Activated T-helper 2 cell treated with anti-CD3 and anti-CD28 coated beads, Interferon-gamma antibody, Interleukin-2, Interleukin-4, amounts not matched to agents 10 μg/mL and 5 μg/mL and 100 μg/mL, durations not matched to agents 14 hours and 24 hours and 36 hours (primary cell): ENCODE measurements at regions of chr16 and their contacts with region 1.

Region 1: DNA sequence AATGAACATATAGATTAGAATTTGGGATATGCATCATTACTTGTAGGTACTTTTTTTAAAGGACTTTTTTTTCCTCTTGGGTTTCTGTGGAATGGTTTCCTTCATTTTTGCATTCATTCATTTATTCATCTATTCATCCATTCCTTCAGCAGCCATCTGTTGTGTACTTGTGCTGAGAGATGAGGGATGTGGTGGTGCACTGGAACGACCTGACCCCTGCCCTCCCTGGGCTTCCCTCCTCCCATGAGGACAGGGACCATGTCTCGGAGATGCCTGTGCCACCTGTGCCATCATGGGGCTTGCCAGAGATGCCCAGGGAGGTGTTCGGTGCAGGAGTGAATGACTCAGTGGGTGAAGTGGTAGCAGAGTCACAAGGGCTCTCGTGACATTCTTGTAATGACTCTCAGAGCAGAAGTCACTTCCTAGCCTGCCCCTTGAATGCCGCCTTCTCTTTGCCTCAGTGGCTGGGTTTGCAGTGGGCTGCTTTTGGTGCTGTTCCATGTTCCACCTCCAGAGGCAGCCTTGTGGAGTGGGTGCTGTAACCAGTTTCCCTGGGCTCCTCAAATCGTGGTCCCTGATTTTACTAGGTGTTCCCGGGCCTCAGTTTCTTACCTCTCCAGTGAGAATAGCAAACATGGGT is 43.9 kb downstream of the CLEC16A start:
- DNase-seq: peak; percentile 63
- H3K4me3 Mint-ChIP-seq: peak overlapping the region; percentile 62
- H3K27ac Mint-ChIP-seq: peak overlapping the region; percentile 84
- H3K4me1 Mint-ChIP-seq: peaks cover 81% of the 10 kb centered on the region
- H3K27me3 Mint-ChIP-seq: no peaks in the 10 kb centered on the region

Region 2: DNA sequence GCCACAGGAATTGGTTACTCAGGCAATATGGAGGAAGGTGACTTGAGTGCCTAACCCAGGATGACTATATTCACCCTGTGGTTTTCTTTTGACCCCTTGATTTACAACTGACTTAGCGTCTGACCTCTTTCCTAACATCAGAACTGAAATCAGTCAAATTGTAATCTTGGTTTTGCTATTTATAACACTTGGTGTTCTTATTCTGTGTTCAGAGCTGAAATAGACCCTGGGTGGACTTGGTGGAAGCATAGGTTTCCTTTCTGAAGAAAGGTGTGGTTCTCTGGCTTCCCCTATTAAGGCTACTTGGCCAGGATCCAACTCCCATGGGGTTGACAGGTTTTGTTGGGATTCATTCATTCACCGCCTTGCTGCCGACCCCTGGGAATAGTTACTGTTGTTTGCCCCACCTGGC is 36.8 kb after region 1 on chr16:
- intact Hi-C with region 1: loop called (anchors 1 kb)
- DNase-seq: no peak
- H3K4me3 Mint-ChIP-seq: no peak overlapping the region
- H3K27ac Mint-ChIP-seq: peak overlapping the region; percentile 92
- H3K4me1 Mint-ChIP-seq: peaks cover 42% of the 10 kb centered on the region
- H3K27me3 Mint-ChIP-seq: no peaks in the 10 kb centered on the region

Region 3: GRCh38 chr16:11076259-11077018 is 88.2 kb after region 1 on chr16:
- intact Hi-C with region 1: loop called (anchors 1 kb)
- DNase-seq: peak; percentile 70
- H3K4me3 Mint-ChIP-seq: peak overlapping the region; percentile 31
- H3K27ac Mint-ChIP-seq: peak overlapping the region; percentile 94
- H3K4me1 Mint-ChIP-seq: peaks cover 95% of the 10 kb centered on the region
- H3K27me3 Mint-ChIP-seq: no peaks in the 10 kb centered on the region

Region 4: GRCh38 chr16:11094072-11094856 is 106.0 kb after region 1 on chr16:
- intact Hi-C with region 1: loop called (anchors 1 kb)
- DNase-seq: peak; percentile 67
- H3K4me3 Mint-ChIP-seq: peak overlapping the region; percentile 50
- H3K27ac Mint-ChIP-seq: peak overlapping the region; percentile 98
- H3K4me1 Mint-ChIP-seq: peaks cover 75% of the 10 kb centered on the region
- H3K27me3 Mint-ChIP-seq: no peaks in the 10 kb centered on the region

Region 5: DNA sequence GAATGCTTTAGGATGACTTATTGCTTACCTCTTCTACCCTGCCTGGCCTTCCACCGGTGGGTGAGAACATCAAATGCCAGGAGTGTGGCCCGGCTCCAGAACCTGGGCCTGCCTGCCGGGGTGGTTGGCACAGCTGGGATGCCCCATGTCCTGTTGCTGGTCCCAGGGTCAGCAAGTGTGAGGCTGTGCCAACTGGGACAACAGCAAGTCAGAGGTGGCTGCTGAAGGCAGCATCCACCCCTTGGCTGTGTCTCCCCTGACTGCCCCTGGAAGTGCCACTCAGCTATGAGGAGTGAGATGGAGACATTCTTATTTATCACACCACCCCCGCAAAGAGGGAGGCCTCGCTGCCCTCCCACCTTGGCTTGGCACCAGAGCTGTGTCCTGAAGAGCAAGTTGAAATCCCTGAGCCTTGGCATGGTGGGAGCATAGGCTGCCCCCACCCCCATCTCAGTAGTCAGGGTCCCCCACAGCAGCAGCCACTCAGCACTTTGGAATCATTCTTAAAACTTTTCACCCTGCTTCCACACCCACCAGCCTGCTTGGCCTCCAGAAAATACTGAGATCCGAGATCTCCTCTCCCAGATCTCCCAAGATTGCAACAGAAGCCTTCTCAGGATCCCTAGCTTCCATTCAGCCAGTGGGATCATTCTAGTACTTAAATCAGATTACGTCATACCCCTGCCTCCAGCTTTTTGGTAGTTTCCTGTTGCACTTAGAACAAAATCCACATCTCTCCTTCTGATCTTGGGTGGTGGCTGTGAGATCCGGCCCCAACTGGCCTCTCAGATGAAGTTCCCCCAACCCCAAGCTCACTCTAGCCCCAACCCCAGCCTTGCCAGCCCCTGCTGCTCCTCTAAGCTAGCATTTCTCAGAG is 140.2 kb after region 1 on chr16:
- intact Hi-C with region 1: no loop called
- DNase-seq: peak; percentile 38
- H3K4me3 Mint-ChIP-seq: peak overlapping the region; percentile 60
- H3K27ac Mint-ChIP-seq: peak overlapping the region; percentile 96
- H3K4me1 Mint-ChIP-seq: peaks cover 76% of the 10 kb centered on the region
- H3K27me3 Mint-ChIP-seq: no peaks in the 10 kb centered on the region

Region 6: GRCh38 chr16:11155284-11155806 is 167.1 kb after region 1 on chr16:
- intact Hi-C with region 1: loop called (anchors 5 kb)
- DNase-seq: peak; percentile 47
- H3K4me3 Mint-ChIP-seq: peak overlapping the region; percentile 42
- H3K27ac Mint-ChIP-seq: peak overlapping the region; percentile 89
- H3K4me1 Mint-ChIP-seq: peaks cover 64% of the 10 kb centered on the region
- H3K27me3 Mint-ChIP-seq: no peaks in the 10 kb centered on the region

Region 7: DNA sequence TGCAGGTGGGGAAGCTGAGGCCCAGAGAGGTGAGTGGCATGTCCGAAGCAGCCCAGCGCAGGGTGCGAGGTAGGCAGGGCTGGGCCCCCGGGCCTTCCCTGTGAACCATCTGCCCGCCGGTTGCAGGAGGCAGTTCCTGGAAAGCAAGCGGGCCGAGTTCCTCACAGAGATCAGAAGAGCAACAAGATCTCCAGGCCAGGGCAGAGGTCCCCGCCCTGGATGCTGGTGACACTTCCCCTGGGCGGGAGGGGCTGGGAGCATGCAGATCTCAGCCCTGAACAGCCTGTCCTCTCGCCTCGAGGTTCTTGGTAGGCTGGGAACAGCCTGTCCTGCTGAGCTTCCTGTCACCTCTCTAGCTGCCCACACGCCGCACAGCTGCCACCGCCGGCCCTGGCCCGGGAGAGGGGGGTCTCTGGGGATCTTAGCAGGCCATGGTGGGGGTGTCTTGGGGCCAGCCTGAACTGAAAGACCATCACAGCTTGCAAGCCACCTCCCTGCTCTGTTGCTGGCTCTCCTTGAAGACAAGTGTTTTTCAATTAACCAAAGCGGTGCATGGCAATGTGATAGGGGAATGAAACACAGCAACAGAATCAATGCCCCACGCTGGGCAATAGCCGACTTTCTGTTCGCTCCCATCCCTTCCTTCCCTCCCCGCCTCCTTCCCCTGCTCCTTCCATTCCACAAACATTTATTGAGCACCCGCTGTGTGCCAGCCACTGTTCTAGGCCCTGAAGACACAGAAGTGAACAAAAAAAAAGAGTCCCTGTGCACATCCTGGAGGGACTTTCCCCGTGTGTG is 236.0 kb after region 1 on chr16:
- intact Hi-C with region 1: loop called (anchors 1 kb)
- DNase-seq: peak; percentile 70
- H3K4me3 Mint-ChIP-seq: peak overlapping the region; percentile 76
- H3K27ac Mint-ChIP-seq: peak overlapping the region; percentile 100
- H3K4me1 Mint-ChIP-seq: peaks cover 50% of the 10 kb centered on the region
- H3K27me3 Mint-ChIP-seq: no peaks in the 10 kb centered on the region

Region 8: DNA sequence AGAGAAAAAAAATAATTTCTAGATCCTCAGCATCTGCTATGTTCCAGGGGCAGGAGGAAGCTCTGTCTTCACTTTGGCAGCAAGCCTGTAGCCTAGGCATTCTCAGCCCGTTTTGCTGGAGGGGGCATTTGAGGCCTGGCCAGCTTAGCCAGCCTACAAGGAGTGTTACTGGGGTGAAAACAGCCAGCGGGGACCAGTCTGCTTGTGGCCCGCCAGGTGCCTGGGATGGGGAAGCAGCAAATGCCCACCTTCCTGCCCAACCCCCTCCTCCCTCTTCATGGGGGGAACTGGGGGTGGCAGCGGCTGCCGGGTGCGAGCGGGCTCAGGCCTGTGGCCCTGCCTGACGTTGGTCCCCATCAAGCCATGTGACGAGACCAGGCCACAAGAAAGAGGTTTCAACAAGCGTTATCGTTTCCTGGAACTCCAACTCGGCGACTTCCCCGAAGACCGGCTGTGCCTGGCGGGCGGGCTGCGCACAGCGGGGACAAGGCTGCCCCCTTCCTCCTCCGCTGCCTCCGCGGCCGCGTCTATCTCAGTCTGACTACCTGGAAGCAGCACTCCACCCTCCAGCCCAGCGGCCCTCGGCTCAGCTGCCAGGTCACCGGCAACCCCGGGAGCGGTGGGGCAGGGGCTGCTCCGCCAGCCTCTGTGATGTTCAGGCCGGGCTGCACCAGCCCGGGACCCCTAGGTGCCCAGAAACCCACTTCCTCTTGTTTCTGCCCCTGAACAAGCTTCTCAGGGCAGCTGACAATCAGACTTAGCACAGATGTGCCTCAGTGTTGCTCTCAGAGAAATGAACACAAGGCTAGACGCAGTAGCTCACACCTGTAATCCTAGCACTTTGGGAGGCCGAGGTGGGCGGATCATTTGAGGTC is 244.8 kb after region 1 on chr16:
- intact Hi-C with region 1: loop called (anchors 1 kb)
- DNase-seq: peak; percentile 91
- H3K4me3 Mint-ChIP-seq: peak overlapping the region; percentile 56
- H3K27ac Mint-ChIP-seq: peak overlapping the region; percentile 98
- H3K4me1 Mint-ChIP-seq: peaks cover 76% of the 10 kb centered on the region
- H3K27me3 Mint-ChIP-seq: no peaks in the 10 kb centered on the region